ENCODE measurements at regions of chr3 and their contacts with region 1.

Region 1: GRCh38 chr3:4656059-4656458 is 162.9 kb downstream of the ITPR1 start:
- DNase-seq: peak; percentile 56
- ATAC-seq: peak; percentile 99
- H3K4me3 ChIP-seq: no peak overlapping the region
- H3K27ac ChIP-seq: no peak overlapping the region
- H3K4me1 ChIP-seq: no peaks in the 10 kb centered on the region
- H3K27me3 ChIP-seq: no peaks in the 10 kb centered on the region
- CTCF ChIP-seq: peak; percentile 85 to 95 (median 91)
- POLR2A ChIP-seq: no peak
- RAD21 ChIP-seq: peak; percentile 95

Region 2: DNA sequence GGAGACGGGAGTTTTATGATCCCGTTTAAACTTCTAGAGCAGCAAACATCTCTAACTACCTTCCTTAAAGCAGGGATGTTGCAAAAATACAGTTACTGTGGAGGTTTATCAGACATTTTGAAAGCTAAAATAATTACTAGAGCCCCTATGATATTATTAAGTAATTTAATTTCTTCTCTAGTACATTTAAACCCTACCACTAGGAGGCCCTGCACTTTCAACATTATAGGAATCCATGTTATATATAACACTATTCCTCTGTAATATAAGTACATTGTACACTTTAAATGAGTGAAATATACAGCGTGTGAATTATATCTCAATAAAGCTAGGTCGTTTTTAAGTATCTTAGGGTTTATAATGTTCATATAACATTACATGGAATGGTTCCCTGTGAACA is 341.4 kb before region 1 on chr3:
- CTCF ChIA-PET with region 1: no interaction called
- POLR2A ChIA-PET with region 1: no interaction called
- RAD21 ChIA-PET with region 1: no interaction called
- intact Hi-C with region 1: no loop called
- DNase-seq: no peak
- ATAC-seq: peak; percentile 57
- H3K4me3 ChIP-seq: no peak overlapping the region
- H3K27ac ChIP-seq: no peak overlapping the region
- H3K4me1 ChIP-seq: no peaks in the 10 kb centered on the region
- H3K27me3 ChIP-seq: no peaks in the 10 kb centered on the region
- CTCF ChIP-seq: peak in 2 of 3 experiments; percentile 35 to 51; a peak in 5 of 6 replicates
- POLR2A ChIP-seq: no peak
- RAD21 ChIP-seq: peak; percentile 31; the same call in 1 of the 2 replicates

Region 3: GRCh38 chr3:4438293-4438692 is 217.8 kb before region 1 on chr3:
- CTCF ChIA-PET with region 1: no interaction called
- POLR2A ChIA-PET with region 1: no interaction called
- RAD21 ChIA-PET with region 1: no interaction called
- intact Hi-C with region 1: no loop called
- DNase-seq: no peak
- ATAC-seq: no peak
- H3K4me3 ChIP-seq: no peak overlapping the region
- H3K27ac ChIP-seq: no peak overlapping the region
- H3K4me1 ChIP-seq: no peaks in the 10 kb centered on the region
- H3K27me3 ChIP-seq: no peaks in the 10 kb centered on the region
- CTCF ChIP-seq: no peak
- POLR2A ChIP-seq: no peak
- RAD21 ChIP-seq: no peak

Region 4: DNA sequence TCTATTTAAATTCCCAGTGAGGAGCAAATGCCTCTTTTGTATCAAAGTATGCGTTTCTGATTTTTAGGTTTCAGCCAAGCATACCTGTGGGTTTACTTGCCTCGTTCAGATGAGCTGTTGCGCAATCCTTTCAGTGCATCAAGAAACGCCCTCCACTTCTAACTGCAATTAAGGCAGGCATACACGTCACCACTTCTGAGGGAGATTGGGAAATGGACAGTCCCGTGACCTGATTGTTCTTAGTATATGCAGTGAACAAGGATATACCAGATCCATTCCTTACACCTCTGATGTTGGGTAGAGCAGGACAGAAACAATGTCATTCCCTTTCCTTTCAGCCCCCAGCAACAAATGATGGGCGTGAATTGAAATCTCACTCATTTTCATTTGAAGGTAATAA is 56.1 kb after region 1 on chr3:
- CTCF ChIA-PET with region 1: no interaction called
- POLR2A ChIA-PET with region 1: no interaction called
- RAD21 ChIA-PET with region 1: no interaction called
- intact Hi-C with region 1: loop called (anchors 2 kb)
- DNase-seq: peak; percentile 21
- ATAC-seq: no peak
- H3K4me3 ChIP-seq: no peak overlapping the region
- H3K27ac ChIP-seq: no peak overlapping the region
- H3K4me1 ChIP-seq: peaks cover 8% of the 10 kb centered on the region in 2 experiments; a peak in 2 of 4 replicates
- H3K27me3 ChIP-seq: no peaks in the 10 kb centered on the region
- CTCF ChIP-seq: no peak
- POLR2A ChIP-seq: no peak
- RAD21 ChIP-seq: no peak

Region 5: GRCh38 chr3:5226783-5227182 is 570.7 kb after region 1 on chr3:
- CTCF ChIA-PET with region 1: no interaction called
- POLR2A ChIA-PET with region 1: no interaction called
- RAD21 ChIA-PET with region 1: no interaction called
- intact Hi-C with region 1: loop called (anchors 10 kb)
- DNase-seq: peak; percentile 3
- ATAC-seq: no peak
- H3K4me3 ChIP-seq: no peak overlapping the region
- H3K27ac ChIP-seq: no peak overlapping the region
- H3K4me1 ChIP-seq: no peaks in the 10 kb centered on the region
- H3K27me3 ChIP-seq: peaks cover 18% of the 10 kb centered on the region; the same call in 1 of the 2 replicates
- CTCF ChIP-seq: peak; percentile 13 to 48 (median 26); a peak in 4 of 6 replicates
- POLR2A ChIP-seq: no peak
- RAD21 ChIP-seq: peak; percentile 71

Measured in HCT116 (cell line).